MCF 10A (cell line): ENCODE measurements at regions of chr6 and their contacts with region 1.

Region 1: DNA sequence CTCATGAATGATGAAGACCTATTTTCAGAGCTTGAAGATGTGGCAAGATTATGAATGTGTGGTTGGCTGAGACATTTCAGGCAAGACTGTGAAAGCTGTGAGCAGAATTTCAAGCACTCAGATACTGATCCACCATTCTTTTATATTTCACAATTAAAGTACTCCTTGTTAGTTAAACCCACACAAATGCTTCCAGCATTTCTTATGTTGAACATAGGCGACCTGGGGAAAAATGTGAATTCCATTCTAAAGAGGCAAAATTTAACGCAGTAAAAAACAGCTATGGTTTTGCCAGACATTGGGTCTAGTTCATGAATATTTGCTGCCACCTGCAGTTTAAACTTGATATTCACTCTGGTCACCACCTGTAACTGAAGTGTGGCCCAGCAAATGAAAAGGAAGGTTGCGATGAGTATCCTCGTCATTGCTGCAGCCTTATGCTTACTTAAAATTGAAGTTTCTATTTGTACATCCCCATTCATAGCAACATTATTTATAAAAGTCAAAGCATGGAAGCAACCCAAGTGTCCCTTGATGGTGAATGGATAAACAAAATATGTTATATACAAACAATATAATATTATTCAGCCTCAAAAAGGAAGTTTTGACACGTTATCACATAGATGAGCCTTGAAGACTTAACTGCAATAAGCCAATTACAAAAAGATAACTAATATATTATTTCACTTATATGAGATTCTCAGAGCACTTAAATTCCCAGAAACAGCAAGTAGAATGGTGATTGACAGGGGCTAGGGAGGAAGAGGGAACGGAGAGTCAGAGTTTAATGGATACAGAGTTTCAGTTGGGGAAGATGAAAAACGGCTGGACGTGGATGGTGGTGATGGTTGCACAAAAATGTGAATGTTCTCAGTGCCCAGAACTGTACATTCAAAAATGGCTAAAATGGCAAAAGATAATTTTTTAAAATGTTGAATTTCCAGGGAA is 32.4 kb upstream of the FAM184A start:
- DNase-seq: peak; percentile 68
- H3K4me3 Mint-ChIP-seq: no peak overlapping the region
- H3K27ac Mint-ChIP-seq: no peak overlapping the region
- H3K4me1 Mint-ChIP-seq: no peaks in the 10 kb centered on the region
- H3K27me3 Mint-ChIP-seq: no peaks in the 10 kb centered on the region
- CTCF ChIP-seq: peak; percentile 56

Region 2: GRCh38 chr6:118810420-118811027 is 300.4 kb before region 1 on chr6:
- CTCF ChIA-PET with region 1: no interaction called
- POLR2A ChIA-PET with region 1: no interaction called
- intact Hi-C with region 1: no loop called
- DNase-seq: no peak
- H3K4me3 Mint-ChIP-seq: no peak overlapping the region
- H3K27ac Mint-ChIP-seq: no peak overlapping the region
- H3K4me1 Mint-ChIP-seq: peaks cover 6% of the 10 kb centered on the region
- H3K27me3 Mint-ChIP-seq: no peaks in the 10 kb centered on the region
- CTCF ChIP-seq: no peak

Region 3: GRCh38 chr6:118968416-118968815 is 142.5 kb before region 1 on chr6:
- CTCF ChIA-PET with region 1: interaction called, 420 read pairs
- POLR2A ChIA-PET with region 1: interaction called, 16 read pairs
- intact Hi-C with region 1: loop called (anchors 1 kb)
- DNase-seq: peak; percentile 47
- H3K4me3 Mint-ChIP-seq: no peak overlapping the region
- H3K27ac Mint-ChIP-seq: no peak overlapping the region
- H3K4me1 Mint-ChIP-seq: no peaks in the 10 kb centered on the region
- H3K27me3 Mint-ChIP-seq: no peaks in the 10 kb centered on the region
- CTCF ChIP-seq: peak; percentile 28

Region 4: GRCh38 chr6:119078376-119079282 is 32.2 kb before region 1 on chr6 and contains the start of gene FAM184A:
- CTCF ChIA-PET with region 1: interaction called, 11 read pairs
- POLR2A ChIA-PET with region 1: interaction called, 3 read pairs
- intact Hi-C with region 1: no loop called
- DNase-seq: peak; percentile 64
- H3K4me3 Mint-ChIP-seq: peak within 1 kb of the TSS; percentile 96
- H3K27ac Mint-ChIP-seq: peak within 1 kb of the TSS; percentile 69
- H3K4me1 Mint-ChIP-seq: peaks cover 14% of the 10 kb centered on the region
- H3K27me3 Mint-ChIP-seq: no peaks in the 10 kb centered on the region
- CTCF ChIP-seq: peak; percentile 21
- total RNA-seq, gene FAM184A: 1.3 and 2.2 TPM in 2 replicates

Region 5: DNA sequence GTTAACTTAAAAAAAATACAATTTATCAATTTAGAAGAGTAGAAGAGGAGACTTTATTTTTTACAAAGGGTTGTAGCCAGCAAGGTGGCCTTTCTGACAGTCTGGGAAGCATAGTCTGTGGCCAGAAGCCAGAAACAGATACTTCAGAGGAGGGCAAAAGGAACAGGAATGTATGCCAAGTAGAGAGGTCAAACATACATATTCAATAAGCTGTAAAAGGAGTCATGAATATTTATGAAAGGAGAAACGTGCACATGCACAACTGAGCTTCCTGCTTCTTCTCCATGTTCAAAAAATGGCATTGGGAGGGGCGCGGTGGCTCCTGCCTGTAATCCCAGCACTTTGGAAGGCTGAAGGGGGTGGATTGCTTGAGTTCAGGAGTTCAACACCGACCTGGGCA is 11.5 kb after region 1 on chr6:
- CTCF ChIA-PET with region 1: interaction called, 11 read pairs
- POLR2A ChIA-PET with region 1: no interaction called
- intact Hi-C with region 1: no loop called
- DNase-seq: no peak
- H3K4me3 Mint-ChIP-seq: no peak overlapping the region
- H3K27ac Mint-ChIP-seq: no peak overlapping the region
- H3K4me1 Mint-ChIP-seq: peaks cover 6% of the 10 kb centered on the region
- H3K27me3 Mint-ChIP-seq: no peaks in the 10 kb centered on the region
- CTCF ChIP-seq: no peak